Activated T-helper 1 cell treated with anti-CD3 and anti-CD28 coated beads, Interleukin-12 subunit alpha, Interleukin-12 subunit beta, Interleukin-2, Interleukin-4 antibody, amounts not matched to agents 30 ng/mL and 10 ng/mL and 1 ng/mL, durations not matched to agents 14 hours and 24 hours and 36 hours (primary cell): ENCODE measurements at regions of chr11 and their contacts with region 1.

Region 1: GRCh38 chr11:48055292-48056132 is 75.2 kb downstream of the PTPRJ start:
- DNase-seq: peak; percentile 81
- H3K4me3 Mint-ChIP-seq: peak overlapping the region; percentile 56
- H3K27ac Mint-ChIP-seq: peak overlapping the region; percentile 84
- H3K4me1 Mint-ChIP-seq: peaks cover 91% of the 10 kb centered on the region
- H3K27me3 Mint-ChIP-seq: no peaks in the 10 kb centered on the region

Region 2: GRCh38 chr11:47879259-47880158 is 176.0 kb before region 1 on chr11:
- intact Hi-C with region 1: no loop called
- DNase-seq: no peak
- H3K4me3 Mint-ChIP-seq: no peak overlapping the region
- H3K27ac Mint-ChIP-seq: no peak overlapping the region
- H3K4me1 Mint-ChIP-seq: no peaks in the 10 kb centered on the region
- H3K27me3 Mint-ChIP-seq: no peaks in the 10 kb centered on the region

Region 3: GRCh38 chr11:47932544-47932943 is 123.0 kb before region 1 on chr11:
- intact Hi-C with region 1: loop called (anchors 1 kb)
- DNase-seq: no peak
- H3K4me3 Mint-ChIP-seq: no peak overlapping the region
- H3K27ac Mint-ChIP-seq: no peak overlapping the region
- H3K4me1 Mint-ChIP-seq: peaks cover 23% of the 10 kb centered on the region
- H3K27me3 Mint-ChIP-seq: no peaks in the 10 kb centered on the region

Region 4: DNA sequence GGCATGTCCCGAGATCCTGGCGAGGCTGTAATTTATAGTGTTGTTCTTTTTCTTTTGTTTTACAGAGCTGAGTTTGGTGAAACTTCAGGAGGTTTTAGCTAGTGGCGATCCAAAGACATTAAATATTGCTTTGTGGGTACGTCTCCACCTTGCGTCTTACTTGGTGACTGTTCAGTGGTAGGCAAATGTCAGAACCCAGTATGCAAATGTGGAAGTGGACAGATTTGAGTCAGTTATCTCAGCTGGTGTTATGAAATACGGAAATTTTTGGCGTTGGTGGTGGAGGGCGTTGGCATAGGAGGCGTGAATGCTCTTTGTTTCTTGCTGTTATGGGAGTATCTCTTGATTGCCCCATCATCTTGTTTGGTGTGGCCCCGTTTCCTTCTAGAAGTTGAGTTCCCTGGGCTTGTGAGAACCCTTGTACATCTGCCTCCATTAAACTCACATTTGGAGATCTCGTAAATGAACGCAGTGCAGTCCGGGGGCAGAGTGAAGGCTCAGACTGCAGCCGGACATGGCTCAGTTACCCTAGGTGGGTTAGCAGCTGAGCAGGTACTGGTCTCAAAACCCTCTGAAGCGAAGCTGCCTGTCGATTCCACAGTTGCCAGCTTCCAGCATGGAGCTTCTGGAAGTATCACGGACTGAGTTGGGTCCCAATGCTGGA is 35.3 kb before region 1 on chr11:
- intact Hi-C with region 1: loop called (anchors 1 kb)
- DNase-seq: peak; percentile 38
- H3K4me3 Mint-ChIP-seq: peak overlapping the region; percentile 46
- H3K27ac Mint-ChIP-seq: peak overlapping the region; percentile 90
- H3K4me1 Mint-ChIP-seq: peaks cover 79% of the 10 kb centered on the region
- H3K27me3 Mint-ChIP-seq: no peaks in the 10 kb centered on the region

Region 5: DNA sequence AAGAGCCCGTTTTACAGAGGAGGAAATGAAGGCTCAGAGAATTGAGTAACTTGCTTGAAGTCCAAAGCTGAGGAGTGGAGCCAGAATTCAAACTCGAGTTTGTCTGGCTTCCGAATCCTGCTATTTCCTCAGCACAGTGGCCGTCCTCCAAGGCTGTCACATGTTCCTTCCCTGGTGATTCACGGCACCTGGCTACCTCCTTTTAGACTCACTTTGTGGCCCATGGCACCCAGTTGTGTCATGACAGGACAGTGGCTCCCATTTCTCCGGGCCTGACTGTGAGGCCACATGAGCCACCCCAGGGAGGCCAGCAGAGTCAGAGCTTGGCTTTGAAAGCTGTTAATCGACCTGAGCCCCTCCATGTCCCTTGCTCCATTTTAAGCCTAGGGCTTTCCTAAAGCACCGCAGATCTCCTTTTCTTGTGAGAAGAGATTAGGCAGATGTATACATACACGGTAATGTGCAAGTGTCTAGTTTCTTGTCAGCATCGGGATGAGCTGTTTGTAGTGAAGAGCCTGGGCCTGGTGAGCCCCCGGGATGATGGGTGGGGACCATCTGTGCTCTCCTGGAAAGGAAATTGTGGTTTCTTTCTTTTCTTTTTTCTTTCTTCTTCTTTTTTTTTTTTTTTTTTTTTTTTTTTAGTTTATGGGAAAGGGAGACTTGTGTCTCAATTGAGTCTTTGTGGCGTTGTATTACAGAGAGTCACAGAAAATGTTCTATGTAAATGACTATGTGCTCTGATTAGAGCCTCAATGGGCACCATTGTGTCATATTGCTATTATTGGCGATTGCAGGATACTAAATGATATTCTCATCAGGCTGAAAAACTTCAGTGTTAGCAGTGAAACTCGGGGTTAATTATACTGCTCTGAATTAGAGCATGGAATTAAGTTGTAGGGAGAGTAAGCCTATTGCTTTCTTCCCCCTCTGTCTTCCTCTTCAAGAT is 20.3 kb before region 1 on chr11:
- intact Hi-C with region 1: no loop called
- DNase-seq: no peak
- H3K4me3 Mint-ChIP-seq: peak overlapping the region; percentile 50
- H3K27ac Mint-ChIP-seq: peak overlapping the region; percentile 59
- H3K4me1 Mint-ChIP-seq: peaks cover 75% of the 10 kb centered on the region
- H3K27me3 Mint-ChIP-seq: no peaks in the 10 kb centered on the region

Region 6: DNA sequence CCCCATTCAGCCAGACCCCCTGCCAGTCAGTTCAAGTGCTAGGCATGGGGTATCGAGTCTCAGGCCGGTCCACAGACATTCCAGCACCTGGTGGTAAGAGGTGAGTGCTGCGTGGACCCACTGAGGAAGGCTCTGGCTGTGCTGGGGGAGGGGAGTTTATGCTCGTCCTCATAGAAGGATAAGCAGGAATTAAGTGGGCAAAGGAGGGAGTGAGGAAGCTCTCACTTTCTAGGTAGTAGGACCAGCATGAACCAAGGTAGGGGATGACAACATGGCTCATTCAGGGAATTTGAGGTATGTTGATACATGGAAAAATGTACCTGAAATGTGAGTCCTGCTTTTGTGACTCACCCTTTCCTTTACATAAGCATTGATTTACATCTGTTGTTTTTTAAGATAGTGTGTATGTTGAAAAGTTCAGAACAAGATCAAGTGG is 41.5 kb after region 1 on chr11:
- intact Hi-C with region 1: loop called (anchors 2 kb)
- DNase-seq: no peak
- H3K4me3 Mint-ChIP-seq: peak overlapping the region; percentile 55
- H3K27ac Mint-ChIP-seq: peak overlapping the region; percentile 87
- H3K4me1 Mint-ChIP-seq: peaks cover 72% of the 10 kb centered on the region
- H3K27me3 Mint-ChIP-seq: no peaks in the 10 kb centered on the region